Right lobe of liver (tissue), 6 donors: ENCODE measurements at regions of chr18 and their contacts with region 1.

Region 1: GRCh38 chr18:75607701-75608100 is 180.2 kb upstream of the SMIM21 start:
- DNase-seq: no peak
- ATAC-seq: no peak
- H3K4me3 ChIP-seq: no peak overlapping the region
- H3K27ac ChIP-seq: no peak overlapping the region
- H3K4me1 ChIP-seq: no peaks in the 10 kb centered on the region
- H3K27me3 ChIP-seq: no peaks in the 10 kb centered on the region
- CTCF ChIP-seq: no peak
- POLR2A ChIP-seq: no peak

Region 2: DNA sequence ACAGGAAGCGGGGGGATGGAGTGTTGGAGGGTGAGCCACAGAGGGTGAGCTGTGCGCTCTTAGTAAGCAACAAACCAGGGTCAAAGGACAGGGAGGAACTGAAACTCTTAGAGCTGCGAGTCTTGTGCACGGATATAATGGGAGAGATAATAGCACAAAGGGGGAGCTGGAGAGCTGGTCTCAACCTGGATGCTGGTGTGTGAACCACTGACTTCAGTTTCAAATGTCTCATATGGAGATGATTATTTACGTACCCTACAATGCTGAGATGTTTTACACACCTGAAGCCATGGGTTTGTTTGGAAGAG is 434.6 kb before region 1 on chr18:
- intact Hi-C with region 1: loop called in 1 of 2 experiments (anchors 10 kb)
- DNase-seq: no peak
- ATAC-seq: peak; percentile 59 to 77 (median 64)
- H3K4me3 ChIP-seq: no peak overlapping the region
- H3K27ac ChIP-seq: no peak overlapping the region
- H3K4me1 ChIP-seq: no peaks in the 10 kb centered on the region
- H3K27me3 ChIP-seq: no peaks in the 10 kb centered on the region
- CTCF ChIP-seq: peak in 1 of 4 donors; percentile 9
- POLR2A ChIP-seq: no peak

Region 3: DNA sequence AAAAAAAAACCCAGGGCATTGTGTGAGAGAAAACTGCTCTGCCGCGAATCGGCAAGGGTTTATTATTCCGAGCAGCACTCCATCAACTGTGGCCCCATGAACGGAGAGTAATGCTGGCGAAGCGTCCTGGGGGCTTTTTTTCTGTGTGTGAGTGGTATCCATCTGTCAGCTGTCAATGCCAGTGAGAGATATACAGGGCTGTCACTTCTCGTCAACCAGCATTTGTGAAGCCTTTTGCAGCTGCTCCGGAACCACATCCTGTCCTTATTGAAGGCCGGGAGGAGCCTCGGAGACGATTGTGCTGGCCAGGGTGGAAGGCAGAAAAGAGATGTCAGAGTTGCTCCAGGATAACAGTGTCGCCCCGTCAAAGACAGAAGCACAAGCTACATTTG is 176.7 kb after region 1 on chr18:
- intact Hi-C with region 1: no loop called
- DNase-seq: no peak
- ATAC-seq: no peak
- H3K4me3 ChIP-seq: no peak overlapping the region
- H3K27ac ChIP-seq: no peak overlapping the region
- H3K4me1 ChIP-seq: no peaks in the 10 kb centered on the region
- H3K27me3 ChIP-seq: no peaks in the 10 kb centered on the region
- CTCF ChIP-seq: no peak
- POLR2A ChIP-seq: no peak